Dendritic cell treated with granulocyte-macrophage colony-stimulating factor and Interleukin-4, amounts not matched to agents 40 ng/mL and 50 ng/mL, for 4 days (primary cell): ENCODE measurements at regions of chr5 and their contacts with region 1.

Region 1: DNA sequence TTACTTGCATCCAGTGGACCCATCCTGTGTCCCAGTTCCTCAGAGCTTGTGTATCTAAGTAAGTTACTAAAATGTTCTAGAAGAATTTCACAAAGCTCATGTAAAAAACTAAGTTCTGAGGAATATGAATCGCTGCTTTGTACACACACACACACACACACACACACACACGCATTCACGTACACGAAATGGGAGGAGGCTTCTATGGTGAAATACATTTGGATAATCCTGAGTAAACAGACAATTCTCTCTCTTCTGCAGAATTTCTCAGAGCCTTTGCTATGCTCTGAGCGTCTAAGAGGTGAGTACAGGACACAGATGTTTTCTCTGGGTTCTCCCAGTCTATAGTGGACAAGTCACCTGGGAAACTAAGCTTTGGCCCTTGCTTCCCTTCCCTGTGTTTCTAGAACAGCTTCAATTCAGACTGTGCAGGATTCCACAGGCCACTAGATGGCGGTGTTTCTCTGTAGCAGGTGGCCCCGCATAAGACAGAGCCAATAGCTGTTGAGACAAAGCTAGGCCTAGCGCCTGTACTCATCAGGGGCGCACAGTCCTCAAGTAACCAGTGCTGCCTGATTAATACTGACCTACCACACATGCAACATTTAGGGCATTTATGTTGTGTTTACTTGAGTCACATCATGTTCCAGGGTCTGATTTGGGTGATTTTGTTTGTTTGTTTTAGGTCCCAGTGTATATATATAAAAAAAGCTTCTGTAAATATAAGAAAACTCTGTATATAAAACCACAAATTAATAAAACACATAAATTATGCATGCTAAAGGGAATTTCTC is 114.8 kb downstream of the LIFR start:
- H3K4me3 Mint-ChIP-seq: no peak overlapping the region
- H3K27ac Mint-ChIP-seq: no peak overlapping the region
- H3K4me1 Mint-ChIP-seq: no peaks in the 10 kb centered on the region
- H3K27me3 Mint-ChIP-seq: peaks cover 85% of the 10 kb centered on the region

Region 2: DNA sequence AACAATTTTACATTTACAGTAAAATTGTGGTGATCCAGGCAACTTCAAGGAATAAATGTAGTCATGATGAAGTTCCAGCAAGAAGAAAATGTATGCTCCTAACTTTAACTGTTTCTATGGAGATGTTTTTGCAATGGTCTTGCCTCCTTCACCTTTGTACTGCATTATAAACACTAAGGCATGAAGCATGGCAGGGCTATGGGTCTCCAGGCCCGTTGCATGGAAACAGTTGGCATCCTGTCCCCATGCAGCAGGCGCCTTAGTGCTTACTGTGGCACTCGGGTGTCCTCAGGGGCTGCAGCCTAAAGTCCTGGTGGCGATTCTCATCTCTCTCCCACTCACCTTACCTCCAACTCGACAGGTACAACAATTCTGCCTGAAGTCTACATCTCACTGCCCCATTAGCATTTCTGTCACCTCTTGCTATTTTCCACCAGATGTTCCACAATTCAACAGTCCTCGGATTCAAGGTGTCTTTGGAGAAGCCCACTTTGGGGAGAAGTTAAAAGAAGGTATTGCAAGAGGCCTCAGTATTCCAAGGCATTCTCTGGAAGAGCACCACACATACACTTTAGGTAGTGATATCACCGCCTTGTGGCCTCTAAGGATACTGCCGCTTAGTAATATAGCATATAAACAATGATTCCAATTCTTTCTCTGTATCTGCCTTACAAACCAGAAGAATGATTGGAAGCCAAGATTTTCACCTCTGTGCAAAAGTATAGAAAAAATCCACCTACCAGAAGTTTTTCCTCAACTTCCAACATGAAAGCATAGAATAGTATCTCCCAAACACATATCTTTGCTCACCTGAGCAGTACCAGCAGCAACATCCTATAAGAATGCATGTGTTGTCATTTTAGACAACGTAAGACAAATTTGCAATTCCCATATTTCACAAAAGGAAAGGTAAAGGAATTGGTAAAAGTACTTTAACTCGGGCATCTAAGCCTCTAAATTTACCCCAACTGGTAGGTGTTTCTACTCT is 109.7 kb after region 1 on chr5:
- intact Hi-C with region 1: loop called (anchors 5 kb)
- H3K4me3 Mint-ChIP-seq: no peak overlapping the region
- H3K27ac Mint-ChIP-seq: no peak overlapping the region
- H3K4me1 Mint-ChIP-seq: no peaks in the 10 kb centered on the region
- H3K27me3 Mint-ChIP-seq: peaks cover 57% of the 10 kb centered on the region

Region 3: DNA sequence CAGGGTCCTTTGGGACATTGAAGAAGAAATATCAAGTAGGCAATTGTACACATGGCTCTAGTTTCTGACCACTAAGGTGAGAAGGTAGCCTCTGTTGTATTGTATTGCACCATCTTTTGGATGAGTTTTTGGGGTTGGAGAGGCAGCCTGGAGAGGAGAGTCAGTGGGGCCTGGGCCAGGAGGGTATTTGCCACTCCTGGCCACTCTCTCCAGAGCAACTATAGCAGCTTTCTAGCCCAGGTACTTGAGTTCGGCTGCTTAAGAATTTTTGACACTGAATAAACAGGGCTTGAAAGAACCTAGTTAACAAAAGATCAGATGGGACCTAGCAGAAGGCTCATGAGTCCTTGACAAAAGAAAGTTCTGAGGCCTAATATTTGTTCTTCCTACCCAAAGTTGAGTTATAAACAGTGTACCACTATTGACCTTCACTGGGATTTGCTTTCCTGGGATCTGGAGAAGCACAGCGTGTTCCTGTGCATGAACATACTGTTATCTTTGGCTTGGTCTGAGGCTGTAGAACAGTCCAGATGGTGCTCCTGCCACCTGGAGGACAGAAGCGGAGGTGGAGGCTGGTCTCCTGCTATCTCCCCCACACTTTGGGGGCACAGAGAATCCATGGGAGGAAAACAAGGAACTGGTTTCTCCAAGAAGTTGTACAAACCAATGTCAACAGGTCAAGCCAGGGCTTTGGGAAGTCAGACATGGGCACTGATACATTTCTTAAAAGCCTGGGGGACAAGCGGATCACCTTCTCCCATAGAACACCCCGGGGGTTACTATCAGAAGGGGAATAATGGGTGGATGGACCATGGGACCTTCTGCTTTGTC is 225.2 kb after region 1 on chr5:
- intact Hi-C with region 1: loop called (anchors 2 kb)
- H3K4me3 Mint-ChIP-seq: no peak overlapping the region
- H3K27ac Mint-ChIP-seq: no peak overlapping the region
- H3K4me1 Mint-ChIP-seq: no peaks in the 10 kb centered on the region
- H3K27me3 Mint-ChIP-seq: peaks cover 19% of the 10 kb centered on the region

Region 4: GRCh38 chr5:38809388-38810359 is 368.0 kb after region 1 on chr5:
- intact Hi-C with region 1: loop called (anchors 1 kb)
- H3K4me3 Mint-ChIP-seq: no peak overlapping the region
- H3K27ac Mint-ChIP-seq: no peak overlapping the region
- H3K4me1 Mint-ChIP-seq: no peaks in the 10 kb centered on the region
- H3K27me3 Mint-ChIP-seq: peaks cover 53% of the 10 kb centered on the region

Region 5: GRCh38 chr5:38922199-38922598 is 480.5 kb after region 1 on chr5:
- intact Hi-C with region 1: loop called (anchors 5 kb)
- H3K4me3 Mint-ChIP-seq: no peak overlapping the region
- H3K27ac Mint-ChIP-seq: no peak overlapping the region
- H3K4me1 Mint-ChIP-seq: no peaks in the 10 kb centered on the region
- H3K27me3 Mint-ChIP-seq: peaks cover 43% of the 10 kb centered on the region